ENCODE measurements at regions of chr10 and their contacts with region 1.

Region 1: DNA sequence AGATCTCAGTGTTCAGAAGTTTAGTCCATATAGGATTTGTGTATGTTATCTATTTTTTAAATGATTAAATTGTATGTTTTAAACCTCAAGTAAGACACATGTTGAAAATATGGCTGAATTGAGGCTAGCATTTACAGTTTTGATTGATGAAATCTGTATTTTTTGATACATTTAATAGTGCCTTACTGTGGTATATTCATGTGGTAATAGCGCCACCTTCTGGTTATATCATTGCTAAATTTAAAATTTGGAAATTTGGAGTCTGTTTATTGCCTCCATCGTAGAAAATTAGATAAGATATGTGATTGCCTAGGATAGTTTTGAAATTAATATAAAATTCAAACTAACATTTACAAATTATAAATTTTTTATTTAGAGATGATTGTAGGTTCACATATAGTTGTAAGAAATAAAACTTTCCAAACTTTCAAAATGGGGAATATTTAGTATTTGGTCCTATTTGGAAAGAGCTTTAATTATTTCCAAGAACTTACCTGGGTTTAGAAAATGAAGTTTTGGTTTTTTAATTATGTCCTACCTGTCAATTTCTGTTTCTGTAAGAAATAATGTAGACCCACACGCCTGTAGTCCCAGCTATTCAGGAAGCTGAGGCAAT is 19.1 kb upstream of the ARMS2 start:
- DNase-seq: peak; percentile 36 to 48
- ATAC-seq: peak; percentile 8 to 72; a peak in 4 of 6 replicates
- H3K4me3 ChIP-seq: no peak overlapping the region
- H3K27ac ChIP-seq: no peak overlapping the region
- H3K4me1 ChIP-seq: no peaks in the 10 kb centered on the region
- CTCF ChIP-seq: peak; percentile 87
- EP300 ChIP-seq: no peak
- POLR2A ChIP-seq: no peak
- RAD21 ChIP-seq: peak; percentile 90 to 94

Region 2: GRCh38 chr10:122239578-122240257 is 195.6 kb before region 1 on chr10:
- CTCF ChIA-PET with region 1: no interaction called
- POLR2A ChIA-PET with region 1: no interaction called
- DNase-seq: no peak
- ATAC-seq: no peak
- H3K4me3 ChIP-seq: no peak overlapping the region
- H3K27ac ChIP-seq: no peak overlapping the region
- H3K4me1 ChIP-seq: 0 out of 3 replicates have a peak, but pooled peaks cover 3% of the 10 kb centered on the region
- CTCF ChIP-seq: no peak
- EP300 ChIP-seq: no peak
- POLR2A ChIP-seq: no peak
- RAD21 ChIP-seq: no peak

Region 3: DNA sequence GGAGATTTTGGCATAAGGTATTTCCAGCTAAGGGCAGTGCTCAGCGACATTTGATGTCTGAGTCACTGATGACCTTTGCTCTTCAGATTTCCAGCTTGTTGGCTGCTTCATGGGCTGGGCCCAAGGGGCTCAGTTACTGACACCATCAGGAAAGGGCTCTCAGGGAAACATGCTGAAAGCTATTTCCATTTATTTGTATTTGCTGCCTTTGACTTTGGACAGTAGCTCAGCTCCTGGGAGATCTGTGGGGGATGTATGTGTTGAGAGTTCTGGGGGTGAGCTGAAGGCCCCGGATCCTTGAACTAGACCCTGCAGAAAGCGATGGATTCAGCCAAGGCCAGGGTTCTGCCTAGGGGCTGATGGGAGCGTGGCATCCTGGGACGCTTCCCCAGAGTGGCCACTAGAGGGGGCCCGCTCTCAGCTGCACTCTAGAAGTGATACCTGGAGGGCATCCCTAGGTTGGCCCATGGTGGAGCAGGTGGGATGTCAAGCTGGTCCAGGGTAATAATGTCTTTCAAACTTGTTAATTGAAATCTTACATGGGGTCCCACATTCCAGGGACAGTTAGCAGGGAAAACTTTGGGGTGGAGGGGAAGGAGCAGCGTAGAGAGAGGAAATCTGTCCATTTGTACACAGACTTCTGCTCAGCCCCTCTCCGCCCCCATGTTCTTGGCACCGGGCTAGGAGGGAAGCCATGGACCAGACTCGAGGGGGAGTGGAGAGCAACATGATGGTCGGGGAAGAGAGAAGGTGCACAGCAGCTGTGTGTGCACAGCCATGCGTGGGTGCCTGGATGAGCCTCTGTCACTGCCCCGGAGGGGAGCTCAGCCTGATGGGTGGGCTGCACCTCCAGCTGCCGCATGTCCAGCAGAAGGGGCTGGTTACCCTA is 167.2 kb before region 1 on chr10:
- CTCF ChIA-PET with region 1: interaction called, 26 read pairs
- POLR2A ChIA-PET with region 1: no interaction called
- DNase-seq: peak; percentile 61 to 76
- ATAC-seq: peak; percentile 82 to 93
- H3K4me3 ChIP-seq: no peak overlapping the region
- H3K27ac ChIP-seq: peak overlapping the region; percentile 65 to 67; a peak in 5 of 6 replicates
- H3K4me1 ChIP-seq: peaks cover 40% of the 10 kb centered on the region
- CTCF ChIP-seq: peak; percentile 78
- EP300 ChIP-seq: no peak
- POLR2A ChIP-seq: no peak
- RAD21 ChIP-seq: peak; percentile 53 to 64

Region 4: DNA sequence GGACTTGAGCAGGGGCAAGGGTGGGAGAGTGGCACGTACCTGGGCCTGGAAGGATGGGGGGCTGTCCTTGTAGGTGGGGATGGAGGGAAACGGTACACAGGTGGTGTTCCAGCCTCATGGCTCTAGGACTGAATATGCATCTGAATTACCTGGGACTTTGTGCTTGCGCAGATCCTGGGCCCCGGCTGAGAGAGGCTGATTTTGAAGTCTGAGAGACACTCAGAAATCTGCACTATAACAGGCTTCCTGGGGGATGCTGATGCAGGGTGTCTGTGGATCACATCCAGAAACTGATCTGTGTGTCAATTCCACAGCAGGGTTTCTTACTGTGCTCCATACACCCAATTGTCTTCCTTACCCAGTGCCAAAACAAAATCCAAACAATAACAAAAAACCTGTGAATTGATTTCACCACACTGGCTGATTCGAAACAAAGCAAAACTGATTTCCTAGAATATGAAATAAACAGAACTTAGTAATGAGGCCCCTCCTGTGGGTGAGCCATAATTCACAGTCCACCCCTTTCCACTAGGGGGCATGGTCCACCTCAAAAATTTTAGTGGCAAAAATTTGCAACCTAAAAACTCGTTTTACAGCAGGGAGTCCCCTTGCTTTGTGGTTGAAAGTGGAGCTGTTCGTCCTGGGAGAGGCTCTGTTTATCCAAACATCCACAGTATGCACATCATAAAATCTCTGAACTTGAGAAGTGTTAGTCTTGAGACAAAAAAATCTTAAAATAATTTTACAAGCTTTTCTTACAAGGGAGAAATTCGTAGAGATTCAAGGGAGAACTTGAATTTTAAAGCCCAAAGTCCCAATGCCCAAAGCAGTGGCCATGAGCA is 92.8 kb before region 1 on chr10:
- CTCF ChIA-PET with region 1: interaction called, 10 read pairs
- POLR2A ChIA-PET with region 1: no interaction called
- DNase-seq: peak; percentile 44 to 71
- ATAC-seq: peak; percentile 81 to 83
- H3K4me3 ChIP-seq: no peak overlapping the region
- H3K27ac ChIP-seq: peak overlapping the region; percentile 32 to 42; a peak in 3 of 6 replicates
- H3K4me1 ChIP-seq: peaks cover 16% of the 10 kb centered on the region
- CTCF ChIP-seq: peak; percentile 72
- EP300 ChIP-seq: no peak
- POLR2A ChIP-seq: no peak
- RAD21 ChIP-seq: peak; percentile 75 to 78

Region 5: DNA sequence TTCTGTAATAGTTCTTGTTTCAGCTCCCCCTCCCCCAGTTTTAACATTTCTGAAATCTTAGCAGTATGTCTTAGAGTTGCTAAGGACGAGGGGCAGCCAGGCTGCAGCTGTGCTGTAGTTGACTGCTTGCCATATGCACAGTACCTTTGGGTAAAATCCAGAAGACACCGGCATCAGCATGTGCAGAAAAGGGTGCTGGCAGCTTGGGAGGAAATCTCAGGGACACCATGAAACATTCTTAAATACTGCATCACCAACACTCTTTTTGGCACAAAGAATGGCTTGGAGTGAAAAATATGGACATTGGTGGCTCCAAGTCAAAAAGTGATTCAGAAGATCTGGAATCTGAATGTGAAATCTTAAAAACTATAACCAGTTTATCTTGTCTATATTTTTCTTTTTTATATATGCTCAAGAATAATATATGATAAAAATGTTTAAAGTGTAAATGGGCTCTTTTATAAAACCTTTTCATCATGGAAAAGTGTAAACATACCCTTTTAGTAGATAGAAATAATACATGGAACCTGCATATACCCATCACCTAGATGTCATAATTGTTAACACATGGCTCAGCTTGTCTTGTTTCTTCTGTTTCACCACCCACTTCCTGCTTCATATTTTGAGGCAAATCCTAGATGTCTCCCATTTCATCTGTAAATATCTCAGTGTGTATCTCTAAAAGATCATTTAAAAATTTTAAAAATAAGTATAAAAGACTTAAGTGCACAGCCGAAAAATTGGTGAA is 15.3 kb before region 1 on chr10:
- CTCF ChIA-PET with region 1: interaction called, 16 read pairs
- POLR2A ChIA-PET with region 1: no interaction called
- DNase-seq: no peak
- ATAC-seq: no peak
- H3K4me3 ChIP-seq: no peak overlapping the region
- H3K27ac ChIP-seq: no peak overlapping the region
- H3K4me1 ChIP-seq: no peaks in the 10 kb centered on the region
- CTCF ChIP-seq: no peak
- EP300 ChIP-seq: no peak
- POLR2A ChIP-seq: no peak
- RAD21 ChIP-seq: no peak

Region 6: DNA sequence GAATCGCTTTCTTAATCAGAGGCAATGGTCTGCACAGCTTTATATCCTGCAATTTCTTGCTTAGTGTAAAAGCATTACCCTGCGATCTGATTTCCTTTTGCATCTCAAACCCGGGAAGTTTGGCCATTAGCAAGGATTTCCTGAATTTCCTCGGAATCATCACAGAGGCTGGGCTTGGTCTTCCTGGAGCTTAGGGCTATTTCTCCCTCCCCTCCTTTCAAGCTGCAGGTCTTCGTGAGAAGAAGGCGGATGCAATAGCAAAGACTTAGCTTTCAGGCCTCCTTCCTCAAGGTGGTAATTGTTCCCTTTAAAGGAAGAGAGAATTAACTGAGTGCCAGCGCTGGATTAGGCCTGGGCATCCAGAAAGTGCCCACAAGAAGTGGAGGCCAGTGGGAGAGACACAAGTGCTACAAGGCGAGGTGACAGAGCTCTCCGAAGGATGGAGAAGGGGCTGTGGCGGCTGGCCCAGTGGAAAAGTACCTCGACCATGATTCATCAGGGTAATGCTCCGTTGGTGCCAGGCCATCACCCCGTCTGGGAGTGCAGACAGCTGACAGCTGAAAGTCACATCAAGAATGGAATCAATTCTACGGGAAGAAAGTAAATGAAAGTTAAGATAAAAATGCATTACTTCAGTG is 15.2 kb after region 1 on chr10:
- CTCF ChIA-PET with region 1: interaction called, 18 read pairs
- POLR2A ChIA-PET with region 1: no interaction called
- DNase-seq: no peak
- ATAC-seq: no peak
- H3K4me3 ChIP-seq: no peak overlapping the region
- H3K27ac ChIP-seq: 0 out of 6 replicates have a peak overlapping the region, but pooled peaks of 1 of the 2 experiments have one; percentile 8
- H3K4me1 ChIP-seq: peaks cover 11% of the 10 kb centered on the region
- CTCF ChIP-seq: no peak
- EP300 ChIP-seq: no peak
- POLR2A ChIP-seq: no peak
- RAD21 ChIP-seq: no peak

Region 7: GRCh38 chr10:122468926-122469781 is 33.8 kb after region 1 on chr10:
- CTCF ChIA-PET with region 1: interaction called, 10 read pairs
- POLR2A ChIA-PET with region 1: no interaction called
- DNase-seq: peak; percentile 88 to 89
- ATAC-seq: peak; percentile 95 to 98
- H3K4me3 ChIP-seq: no peak overlapping the region
- H3K27ac ChIP-seq: peak overlapping the region; percentile 68 to 86
- H3K4me1 ChIP-seq: peaks cover 24% of the 10 kb centered on the region
- CTCF ChIP-seq: peak; percentile 29; the same call in 2 of the 3 replicates
- EP300 ChIP-seq: peak; percentile 82 to 84; a peak in 3 of 5 replicates
- POLR2A ChIP-seq: no peak
- RAD21 ChIP-seq: peak; percentile 50 to 67

Region 8: DNA sequence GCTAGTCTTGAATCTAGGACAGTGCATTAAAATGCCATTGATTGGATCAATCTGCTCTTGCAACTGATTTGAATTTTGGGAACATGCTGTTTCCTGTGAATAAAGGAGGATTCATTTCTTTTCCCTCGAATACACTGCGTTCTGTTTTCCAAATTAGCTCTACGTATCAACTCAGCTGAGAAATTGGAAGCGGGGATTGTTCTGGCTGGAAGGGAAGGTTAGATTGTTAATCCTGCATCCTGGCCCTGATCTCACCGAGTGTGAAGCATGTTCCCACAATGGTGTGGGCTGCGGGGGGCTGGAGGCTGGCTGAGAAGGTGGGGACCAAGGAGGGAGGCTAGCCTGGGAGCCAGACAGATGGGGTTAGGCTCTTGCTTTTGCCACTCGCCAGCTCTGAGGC is 43.7 kb after region 1 on chr10:
- CTCF ChIA-PET with region 1: interaction called, 11 read pairs
- POLR2A ChIA-PET with region 1: no interaction called
- DNase-seq: no peak
- ATAC-seq: no peak
- H3K4me3 ChIP-seq: no peak overlapping the region
- H3K27ac ChIP-seq: no peak overlapping the region
- H3K4me1 ChIP-seq: no peaks in the 10 kb centered on the region
- CTCF ChIP-seq: no peak
- EP300 ChIP-seq: no peak
- POLR2A ChIP-seq: no peak
- RAD21 ChIP-seq: no peak